Activated CD4-positive, alpha-beta T cell treated with anti-CD3 and anti-CD28 coated beads for 36 hours (primary cell): ENCODE measurements at regions of chr12 and their contacts with region 1.

Region 1: GRCh38 chr12:49945394-49946080 is 5.0 kb upstream of the AQP2 start:
- DNase-seq: peak; percentile 94
- ATAC-seq: peak; percentile 100
- H3K4me3 Mint-ChIP-seq: peak overlapping the region; percentile 74
- H3K27ac Mint-ChIP-seq: peak overlapping the region; percentile 95
- H3K4me1 Mint-ChIP-seq: peaks cover 19% of the 10 kb centered on the region
- H3K27me3 Mint-ChIP-seq: no peaks in the 10 kb centered on the region

Region 2: DNA sequence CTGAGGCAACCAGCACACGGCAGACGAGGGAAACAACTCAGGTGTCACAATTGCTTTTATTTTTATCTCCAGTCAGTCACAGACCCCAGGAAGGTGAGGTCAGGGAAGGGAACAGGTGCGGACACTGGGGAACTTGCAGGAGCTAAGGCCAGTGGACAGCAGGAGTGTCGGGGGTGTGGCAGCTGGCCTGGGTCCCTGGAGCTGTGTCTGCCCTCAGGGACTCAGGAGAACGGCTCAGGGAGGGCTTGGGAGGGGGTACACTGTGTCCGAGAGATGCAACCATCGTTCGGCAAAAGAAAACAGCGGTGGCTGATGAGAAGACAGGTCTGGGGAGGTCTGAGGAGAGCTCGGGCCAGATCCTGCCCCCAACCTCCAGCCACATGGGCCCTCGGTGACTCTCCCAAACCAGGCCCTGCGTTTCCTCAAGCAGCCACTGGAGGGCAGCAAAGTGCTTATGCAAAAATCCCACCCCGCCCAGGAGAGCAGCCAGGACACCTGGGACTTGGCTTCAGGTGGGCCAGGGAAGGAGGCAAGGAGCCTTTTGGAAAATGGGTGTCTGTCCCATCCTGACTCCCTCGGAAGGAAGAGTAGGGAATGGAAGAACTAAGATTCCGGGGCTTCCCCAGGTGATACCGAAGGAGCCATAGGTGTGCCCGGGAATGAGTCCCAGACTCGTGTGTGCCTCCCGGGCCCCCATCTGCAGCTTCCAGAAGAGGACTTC is 78.5 kb before region 1 on chr12:
- CTCF ChIA-PET with region 1: interaction called, 18 read pairs
- POLR2A ChIA-PET with region 1: interaction called, 3 read pairs
- intact Hi-C with region 1: loop called (anchors 1 to 5 kb)
- DNase-seq: peak; percentile 86
- ATAC-seq: peak; percentile 93
- H3K4me3 Mint-ChIP-seq: no peak overlapping the region
- H3K27ac Mint-ChIP-seq: no peak overlapping the region
- H3K4me1 Mint-ChIP-seq: no peaks in the 10 kb centered on the region
- H3K27me3 Mint-ChIP-seq: no peaks in the 10 kb centered on the region

Region 3: GRCh38 chr12:49903695-49904423 is 41.7 kb before region 1 on chr12 and contains the start of gene FAIM2:
- CTCF ChIA-PET with region 1: interaction called, 16 read pairs
- POLR2A ChIA-PET with region 1: no interaction called
- intact Hi-C with region 1: no loop called
- DNase-seq: peak; percentile 68
- ATAC-seq: peak; percentile 75
- H3K4me3 Mint-ChIP-seq: peak within 1 kb of the TSS; percentile 57
- H3K27ac Mint-ChIP-seq: peak within 1 kb of the TSS; percentile 3
- H3K4me1 Mint-ChIP-seq: peaks cover 13% of the 10 kb centered on the region
- H3K27me3 Mint-ChIP-seq: no peaks in the 10 kb centered on the region
- total RNA-seq, gene FAIM2: 0.53 to 0.91 TPM

Region 4: GRCh38 chr12:49930515-49931288 is 14.8 kb before region 1 on chr12:
- CTCF ChIA-PET with region 1: interaction called, 23 read pairs
- POLR2A ChIA-PET with region 1: no interaction called
- intact Hi-C with region 1: no loop called
- DNase-seq: no peak
- ATAC-seq: peak; percentile 68
- H3K4me3 Mint-ChIP-seq: no peak overlapping the region
- H3K27ac Mint-ChIP-seq: no peak overlapping the region
- H3K4me1 Mint-ChIP-seq: peaks cover 7% of the 10 kb centered on the region
- H3K27me3 Mint-ChIP-seq: no peaks in the 10 kb centered on the region

Region 5: GRCh38 chr12:49959570-49960465 is 14.3 kb after region 1 on chr12:
- CTCF ChIA-PET with region 1: interaction called, 74 read pairs
- POLR2A ChIA-PET with region 1: no interaction called
- intact Hi-C with region 1: no loop called
- DNase-seq: no peak
- ATAC-seq: no peak
- H3K4me3 Mint-ChIP-seq: no peak overlapping the region
- H3K27ac Mint-ChIP-seq: no peak overlapping the region
- H3K4me1 Mint-ChIP-seq: peaks cover 5% of the 10 kb centered on the region
- H3K27me3 Mint-ChIP-seq: peaks cover 58% of the 10 kb centered on the region